ENCODE measurements at regions of chr12 and their contacts with region 1.

Region 1: DNA sequence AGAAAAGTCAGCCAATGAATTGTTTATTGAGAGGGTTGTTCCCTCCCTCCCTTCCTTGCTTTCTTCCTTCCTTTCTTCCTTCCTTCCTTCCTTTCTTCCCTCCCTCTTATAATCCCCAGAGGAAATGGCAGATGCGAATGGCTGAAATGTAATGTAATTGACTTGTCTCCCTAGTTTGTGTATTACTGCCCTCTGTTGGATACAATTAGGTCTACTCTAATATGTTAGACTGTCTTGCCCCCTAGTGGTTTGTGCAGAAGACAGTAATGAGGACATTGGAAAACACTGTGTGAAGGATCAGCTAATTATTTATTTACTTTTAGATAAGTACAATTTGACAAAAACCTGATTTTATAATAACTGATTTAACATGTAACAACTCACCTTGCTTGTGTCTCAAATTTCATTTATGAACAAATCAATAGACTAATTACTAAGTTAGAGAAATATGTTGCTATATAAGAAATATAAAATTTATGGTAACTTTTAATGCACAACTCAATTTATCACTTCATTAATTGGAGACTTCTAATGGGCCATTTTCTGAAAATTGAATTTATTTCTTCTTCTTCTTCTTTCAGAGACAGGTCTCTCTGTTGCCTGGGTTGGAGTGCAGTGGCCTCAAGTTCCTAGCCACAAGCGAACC is 229.8 kb upstream of the LRIG3 start:
- DNase-seq: no peak
- ATAC-seq: peak; percentile 89 to 92

Region 2: DNA sequence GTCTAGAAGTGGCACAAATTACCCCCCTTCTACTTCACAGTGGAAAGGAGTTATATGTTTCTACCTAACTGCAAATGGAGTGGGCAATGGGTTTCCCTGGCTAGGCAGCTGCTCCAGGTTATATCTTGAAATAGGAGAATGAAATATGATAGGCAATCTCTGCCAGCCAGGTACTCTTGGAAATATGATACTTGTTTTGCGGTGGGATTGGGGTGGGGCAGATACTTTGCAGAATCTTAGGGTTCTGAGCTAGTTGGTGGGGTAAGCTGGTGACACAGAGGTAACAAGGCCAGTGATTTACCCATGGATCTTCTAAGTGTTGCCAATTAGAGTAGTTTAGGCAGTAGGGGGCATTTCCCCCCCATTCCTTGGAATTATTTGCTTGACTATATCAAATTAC is 1068.6 kb before region 1 on chr12:
- intact Hi-C with region 1: no loop called
- DNase-seq: no peak
- ATAC-seq: no peak

Region 3: DNA sequence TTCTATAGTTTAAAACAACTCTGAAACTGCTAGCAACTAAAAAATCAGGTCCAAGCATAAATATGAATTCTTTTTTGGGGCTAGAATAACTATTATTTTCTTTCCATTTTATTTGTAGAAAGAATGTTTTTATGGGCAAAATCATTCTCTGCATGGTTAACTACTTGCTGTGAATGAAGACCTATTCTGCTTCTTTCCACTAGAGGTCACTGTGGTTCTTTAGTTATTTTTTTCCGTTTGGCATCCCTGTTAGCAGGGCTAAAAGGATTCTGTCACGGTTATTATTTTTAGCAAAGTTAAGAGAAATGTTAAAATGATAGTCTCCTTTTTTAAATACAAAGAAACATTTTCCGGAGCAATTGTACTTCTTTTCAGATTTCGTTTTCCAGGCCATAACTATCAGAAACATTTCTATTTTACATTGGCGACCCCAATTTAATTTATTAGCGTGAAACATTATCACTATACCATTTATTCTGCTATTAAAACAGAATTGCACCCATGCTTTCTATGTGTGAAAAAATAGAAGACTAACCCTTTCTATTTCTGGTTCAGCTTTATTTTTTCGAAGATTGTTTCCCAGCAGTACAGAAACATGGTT is 804.0 kb before region 1 on chr12:
- intact Hi-C with region 1: loop called (anchors 2 to 5 kb)
- DNase-seq: no peak
- ATAC-seq: peak in 1 of 2 donors; percentile 61

Region 4: DNA sequence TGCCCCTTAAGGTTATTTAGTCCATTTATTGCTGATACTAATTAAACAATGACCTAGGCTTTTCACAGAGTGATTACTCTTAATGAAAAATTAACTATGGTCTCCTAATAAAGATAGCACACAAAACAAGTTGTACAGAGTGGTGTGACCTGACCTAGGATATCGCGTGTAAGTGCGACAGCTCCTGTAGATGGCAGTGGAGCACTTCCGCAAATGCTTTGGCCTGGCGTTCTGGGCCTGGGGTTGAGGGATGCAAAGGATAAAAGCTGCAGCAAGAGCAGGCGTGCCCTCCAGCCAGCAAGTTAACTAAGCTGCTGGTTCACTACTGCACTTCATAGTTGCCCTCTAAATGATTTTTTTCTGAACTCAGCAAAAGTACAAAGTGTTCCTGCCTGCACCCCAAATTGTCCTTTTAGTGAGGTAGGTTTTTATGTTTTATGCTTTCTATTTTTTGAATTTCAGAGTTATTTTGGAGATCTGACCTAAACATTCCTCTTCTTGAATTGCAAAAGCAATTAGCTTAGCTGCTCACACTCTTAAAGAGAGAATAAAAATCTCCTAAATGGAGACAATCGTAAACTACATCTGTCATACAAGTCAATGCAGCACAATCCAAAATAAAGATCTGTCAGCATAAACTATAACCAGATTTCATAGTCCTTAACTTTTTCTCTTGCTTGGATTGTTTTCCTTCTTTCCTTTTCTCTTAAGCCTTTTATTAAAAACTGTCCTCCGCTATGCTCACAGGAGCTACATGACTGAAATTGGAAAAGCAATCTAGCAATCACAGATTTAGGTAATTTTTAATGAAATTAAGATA is 609.4 kb before region 1 on chr12:
- intact Hi-C with region 1: loop called (anchors 1 to 10 kb)
- DNase-seq: peak; percentile 63
- ATAC-seq: peak; percentile 87 to 94

Region 5: DNA sequence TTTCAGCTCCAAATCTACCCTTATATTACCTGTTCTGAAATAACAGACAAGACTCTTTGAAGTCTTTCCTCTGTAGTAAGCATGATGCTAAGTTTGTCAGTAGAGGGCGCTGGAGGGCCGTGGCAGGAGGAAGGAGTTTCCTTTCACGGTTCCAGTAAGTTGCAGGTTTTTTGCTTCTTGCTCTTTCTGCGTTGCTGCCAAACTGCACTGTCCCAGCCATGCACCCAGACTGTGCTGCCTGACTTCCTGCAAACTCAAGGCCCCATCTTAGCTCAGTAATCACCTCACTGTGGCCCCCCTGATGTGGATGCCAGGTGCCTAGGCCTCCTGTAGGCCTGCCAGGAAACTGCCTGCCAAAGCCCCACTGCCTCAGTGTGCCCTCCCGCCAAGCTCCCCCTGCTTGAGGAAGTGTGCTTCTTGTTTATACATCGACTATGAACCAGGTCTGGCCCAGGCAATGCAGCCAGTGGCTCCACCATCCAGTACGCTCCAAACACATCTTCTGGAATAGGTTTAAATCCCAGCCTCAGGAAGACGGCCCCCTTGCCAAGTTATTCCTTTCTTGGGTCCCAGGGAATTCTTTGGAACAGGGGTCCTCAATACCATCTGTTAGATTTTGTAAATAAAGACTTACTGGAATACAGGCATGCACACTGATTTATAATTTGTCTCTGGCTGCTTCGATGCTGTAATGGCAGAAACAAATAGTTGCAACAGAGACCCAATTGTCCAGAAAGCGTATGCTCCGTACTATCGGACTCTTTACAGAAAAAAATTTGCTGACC is 36.1 kb before region 1 on chr12:
- intact Hi-C with region 1: loop called (anchors 5 kb)
- DNase-seq: peak; percentile 70
- ATAC-seq: peak; percentile 78 to 84

Region 6: DNA sequence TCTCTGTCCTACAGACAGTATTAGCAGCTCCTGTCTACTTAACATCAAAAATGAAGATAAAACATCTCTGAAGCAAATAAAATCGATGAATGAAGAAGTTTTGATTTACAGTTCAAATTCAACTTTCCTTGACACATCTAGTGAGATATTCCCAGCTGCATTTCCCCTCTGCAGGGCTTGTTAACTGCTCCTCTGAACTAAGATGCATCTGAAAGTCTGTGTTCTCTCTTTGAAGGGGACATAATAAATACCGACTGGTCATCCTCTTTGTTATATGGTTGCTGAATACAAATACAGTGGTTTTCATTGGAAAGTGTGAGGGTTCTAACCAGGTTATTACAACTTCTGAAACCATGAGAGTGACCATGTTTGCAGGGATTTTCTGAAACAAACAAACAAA is 179.3 kb after region 1 on chr12:
- intact Hi-C with region 1: no loop called
- DNase-seq: no peak
- ATAC-seq: no peak

Measured in left cardiac atrium (tissue), 4 donors.